Dorsolateral prefrontal cortex (tissue), 120 donors: ENCODE measurements at regions of chr2 and their contacts with region 1.

Region 1: GRCh38 chr2:95728878-95729596 is 137.2 kb downstream of the TRIM43 start:
- DNase-seq: peak; percentile 39 to 89 (median 77)
- H3K4me3 ChIP-seq: no peak overlapping the region
- H3K27ac ChIP-seq: peak overlapping the region in 6 of 59 donors; percentile 11 to 52 (median 30)
- H3K27me3 ChIP-seq: peaks cover 0 to 4% (median 0%) of the 10 kb centered on the region in 45 donors
- CTCF ChIP-seq: peak; percentile 63 to 97 (median 88)

Region 2: GRCh38 chr2:95345566-95346230 is 383.3 kb before region 1 on chr2:
- intact Hi-C with region 1: loop called in 1 of 2 experiments (anchors 5 kb)
- DNase-seq: peak; percentile 66 to 88 (median 76)
- H3K4me3 ChIP-seq: peak overlapping the region; percentile 37 to 77 (median 65)
- H3K27ac ChIP-seq: peak overlapping the region in 45 of 59 donors; percentile 4 to 79 (median 59)
- H3K27me3 ChIP-seq: peaks cover 0 to 2% (median 0%) of the 10 kb centered on the region in 45 donors
- CTCF ChIP-seq: peak; percentile 55 to 90 (median 78)

Region 3: DNA sequence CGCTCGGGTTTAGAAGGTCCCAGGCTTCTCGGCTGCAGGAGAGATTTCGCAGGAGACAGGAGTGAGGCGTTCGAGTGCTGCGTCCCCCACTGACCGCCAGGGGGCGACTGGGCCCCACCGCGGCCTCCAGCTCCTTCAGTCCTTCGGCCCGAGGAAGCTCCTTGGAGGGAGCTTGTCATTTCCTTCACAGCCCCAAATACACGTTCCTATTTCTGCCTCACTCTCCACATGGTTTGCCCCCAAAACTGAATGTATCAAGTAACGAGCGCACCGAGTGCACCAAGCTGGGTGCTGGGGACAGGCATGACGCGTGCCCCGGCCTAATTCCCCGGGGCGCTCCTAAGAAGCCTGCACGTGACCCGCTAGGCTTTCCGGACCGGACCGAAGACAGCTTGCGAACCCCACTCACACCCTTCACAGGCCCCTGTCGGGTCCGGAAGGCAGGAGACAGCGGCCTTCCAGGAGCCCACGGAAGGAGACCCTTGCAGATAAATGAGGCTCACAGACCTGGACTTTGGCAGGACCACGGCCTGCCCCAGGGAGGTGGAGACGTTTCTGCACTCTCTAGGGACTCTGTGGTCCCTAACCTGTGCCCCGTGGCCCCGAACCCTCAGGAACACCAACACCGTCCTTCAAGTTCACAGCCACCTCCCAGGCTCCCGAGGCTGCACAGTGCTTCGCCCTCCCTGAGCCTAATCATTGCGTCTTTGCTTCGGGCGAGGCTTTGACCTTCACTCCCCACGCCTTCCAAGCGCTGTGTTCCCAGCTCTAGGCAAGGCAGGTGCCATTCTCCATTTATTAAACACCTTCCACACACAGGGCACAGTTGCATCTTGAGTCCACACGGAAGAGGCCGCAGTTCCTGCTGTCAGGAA is 339.6 kb before region 1 on chr2:
- intact Hi-C with region 1: loop called in 1 of 2 experiments (anchors 5 kb)
- DNase-seq: peak in 9 of 10 donors; percentile 50 to 82 (median 71)
- H3K4me3 ChIP-seq: peak overlapping the region in 11 of 59 donors; percentile 9 to 36 (median 26)
- H3K27ac ChIP-seq: peak overlapping the region in 3 of 59 donors; percentile 25 to 44 (median 36)
- H3K27me3 ChIP-seq: no peaks in the 10 kb centered on the region
- CTCF ChIP-seq: peak; percentile 47 to 94 (median 88)

Region 4: DNA sequence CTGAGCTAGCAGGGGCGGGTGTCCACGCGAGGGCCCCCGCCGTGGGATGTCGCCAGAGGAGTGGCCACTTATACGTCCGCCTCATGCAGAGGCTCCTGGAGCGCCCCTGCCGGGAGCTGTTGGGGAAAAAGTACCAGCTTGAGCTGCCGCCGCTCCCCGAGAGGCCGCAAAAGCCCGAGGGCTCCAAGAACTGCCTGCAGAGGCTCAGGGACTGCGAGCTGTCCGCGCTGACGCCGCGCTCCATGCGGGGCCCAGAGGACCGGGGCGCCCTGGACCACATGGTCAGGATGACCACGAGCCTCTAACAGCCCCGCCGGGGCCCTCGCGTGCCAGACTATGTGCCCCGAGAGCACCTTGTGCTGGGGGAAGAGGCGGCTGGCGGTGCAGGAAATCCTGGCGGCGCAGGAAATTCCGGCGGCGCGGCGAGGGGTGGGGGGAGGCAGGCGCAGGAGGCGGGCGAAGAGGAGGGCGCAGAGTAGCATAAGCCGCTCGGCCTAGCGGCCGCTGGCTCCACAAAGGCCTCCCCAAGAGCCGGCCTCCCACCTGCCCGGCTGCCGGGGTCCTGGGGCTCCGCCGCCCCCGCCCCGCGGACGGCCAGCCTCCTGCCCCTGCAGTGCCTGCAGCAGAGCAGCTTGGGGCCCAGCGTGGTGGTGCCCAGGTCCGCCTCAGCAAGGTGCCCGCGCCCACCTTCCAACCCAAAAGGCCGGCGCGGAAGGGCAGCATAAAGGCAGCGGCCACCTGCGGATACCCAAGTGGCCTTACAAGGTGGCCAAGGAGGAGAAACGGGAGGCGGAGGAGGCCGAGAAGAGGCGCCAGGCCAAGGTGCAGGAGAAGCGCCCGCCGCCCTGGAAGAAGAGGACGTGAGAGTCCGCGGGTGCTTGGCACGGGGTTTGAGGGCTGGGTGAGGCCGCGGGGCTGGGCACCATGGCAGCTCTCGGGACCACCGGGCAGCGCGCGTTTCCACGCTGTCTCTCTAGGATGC is 202.4 kb before region 1 on chr2:
- intact Hi-C with region 1: loop called in 1 of 2 experiments (anchors 10 kb)
- DNase-seq: peak; percentile 64 to 86 (median 76)
- H3K4me3 ChIP-seq: peak overlapping the region; percentile 57 to 95 (median 82)
- H3K27ac ChIP-seq: peak overlapping the region in 56 of 59 donors; percentile 27 to 92 (median 81)
- H3K27me3 ChIP-seq: no peaks in the 10 kb centered on the region
- CTCF ChIP-seq: peak in 54 of 56 donors; percentile 18 to 67 (median 41)